Activated naive CD4-positive, alpha-beta T cell treated with anti-CD3 and anti-CD28 coated beads for 36 hours (primary cell): ENCODE measurements at regions of chr17 and their contacts with region 1.

Region 1: DNA sequence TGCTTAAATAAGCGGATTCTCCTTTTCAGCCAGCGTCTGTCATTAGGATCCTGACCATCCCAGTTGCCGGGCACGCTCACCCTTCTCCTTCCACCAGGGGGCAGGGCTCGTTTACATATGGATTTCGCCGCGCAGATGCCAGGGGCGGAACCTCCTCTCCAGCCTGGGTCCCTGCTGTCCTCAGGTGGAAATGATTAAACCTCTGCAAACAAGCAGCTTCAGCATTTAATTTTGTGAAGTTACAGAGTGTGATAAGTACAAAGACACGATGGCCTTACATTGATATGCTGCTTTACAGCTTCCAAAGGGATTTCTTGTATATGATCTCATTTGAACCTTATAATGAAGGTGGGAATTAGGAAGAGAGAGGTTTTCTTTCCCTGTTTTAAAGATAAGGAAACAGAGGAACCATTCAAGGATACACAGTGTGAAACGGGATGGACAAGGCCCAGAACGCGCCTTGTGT is 3.9 kb upstream of the KRT28 start:
- DNase-seq: peak; percentile 90
- H3K4me3 Mint-ChIP-seq: no peak overlapping the region
- H3K27ac Mint-ChIP-seq: no peak overlapping the region
- H3K4me1 Mint-ChIP-seq: no peaks in the 10 kb centered on the region
- H3K27me3 Mint-ChIP-seq: peaks cover 23% of the 10 kb centered on the region

Region 2: GRCh38 chr17:40854159-40854814 is 50.6 kb after region 1 on chr17:
- CTCF ChIA-PET with region 1: interaction called, 3 read pairs
- intact Hi-C with region 1: loop called (anchors 5 kb)
- DNase-seq: no peak
- H3K4me3 Mint-ChIP-seq: no peak overlapping the region
- H3K27ac Mint-ChIP-seq: no peak overlapping the region
- H3K4me1 Mint-ChIP-seq: peaks cover 2% of the 10 kb centered on the region
- H3K27me3 Mint-ChIP-seq: peaks cover 5% of the 10 kb centered on the region

Region 3: GRCh38 chr17:40909351-40909750 is 105.7 kb after region 1 on chr17:
- CTCF ChIA-PET with region 1: no interaction called
- intact Hi-C with region 1: loop called (anchors 5 kb)
- DNase-seq: peak; percentile 74
- H3K4me3 Mint-ChIP-seq: no peak overlapping the region
- H3K27ac Mint-ChIP-seq: no peak overlapping the region
- H3K4me1 Mint-ChIP-seq: no peaks in the 10 kb centered on the region
- H3K27me3 Mint-ChIP-seq: peaks cover 20% of the 10 kb centered on the region